Uterus (tissue), 4 donors: ENCODE measurements at regions of chr11 and their contacts with region 1.

Region 1: DNA sequence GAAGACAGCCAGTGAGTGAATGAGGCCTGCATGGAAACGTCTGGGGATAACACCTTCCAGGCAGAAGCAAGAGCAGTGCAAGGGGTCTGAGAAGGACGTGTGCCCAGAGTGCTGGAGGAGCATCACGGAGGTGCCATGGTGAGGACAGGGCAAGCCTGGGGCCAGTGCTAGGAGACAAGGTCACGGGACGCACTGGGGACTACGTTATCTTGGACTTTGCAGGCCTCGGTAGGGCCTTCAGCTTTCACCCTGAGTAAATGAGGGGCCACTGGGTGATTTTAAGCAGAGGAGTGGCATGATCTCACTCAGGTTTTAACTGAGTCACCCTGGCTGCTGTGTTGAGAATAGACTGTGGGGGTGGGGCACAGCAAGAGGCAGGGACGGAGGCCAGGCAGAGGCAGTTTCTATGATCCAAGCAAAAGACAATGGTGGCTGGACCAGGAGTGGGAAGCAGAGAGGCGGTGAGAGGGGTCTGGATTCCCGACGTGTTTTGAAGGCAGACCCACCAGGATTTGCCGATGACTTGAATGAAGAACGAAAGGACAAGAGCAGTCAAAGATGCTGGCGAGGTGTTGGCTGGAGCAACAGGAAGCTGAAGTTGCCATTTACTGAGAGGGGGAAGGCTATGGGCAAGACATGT is 102.7 kb upstream of the PARVA start:
- DNase-seq: no peak
- H3K4me3 ChIP-seq: no peak overlapping the region
- H3K27ac ChIP-seq: no peak overlapping the region
- H3K4me1 ChIP-seq: no peaks in the 10 kb centered on the region
- H3K27me3 ChIP-seq: no peaks in the 10 kb centered on the region
- CTCF ChIP-seq: no peak
- POLR2A ChIP-seq: no peak

Region 2: GRCh38 chr11:11931461-11932055 is 343.1 kb before region 1 on chr11:
- intact Hi-C with region 1: loop called (anchors 10 kb)
- DNase-seq: peak; percentile 16 to 44
- H3K4me3 ChIP-seq: no peak overlapping the region
- H3K27ac ChIP-seq: peak overlapping the region in 1 of 2 donors; percentile 60
- H3K4me1 ChIP-seq: peaks cover 0 to 4% of the 10 kb centered on the region in 2 donors
- H3K27me3 ChIP-seq: no peaks in the 10 kb centered on the region
- CTCF ChIP-seq: peak; percentile 65 to 81 (median 74)
- POLR2A ChIP-seq: no peak